ENCODE measurements at regions of chr3 and their contacts with region 1.

Region 1: DNA sequence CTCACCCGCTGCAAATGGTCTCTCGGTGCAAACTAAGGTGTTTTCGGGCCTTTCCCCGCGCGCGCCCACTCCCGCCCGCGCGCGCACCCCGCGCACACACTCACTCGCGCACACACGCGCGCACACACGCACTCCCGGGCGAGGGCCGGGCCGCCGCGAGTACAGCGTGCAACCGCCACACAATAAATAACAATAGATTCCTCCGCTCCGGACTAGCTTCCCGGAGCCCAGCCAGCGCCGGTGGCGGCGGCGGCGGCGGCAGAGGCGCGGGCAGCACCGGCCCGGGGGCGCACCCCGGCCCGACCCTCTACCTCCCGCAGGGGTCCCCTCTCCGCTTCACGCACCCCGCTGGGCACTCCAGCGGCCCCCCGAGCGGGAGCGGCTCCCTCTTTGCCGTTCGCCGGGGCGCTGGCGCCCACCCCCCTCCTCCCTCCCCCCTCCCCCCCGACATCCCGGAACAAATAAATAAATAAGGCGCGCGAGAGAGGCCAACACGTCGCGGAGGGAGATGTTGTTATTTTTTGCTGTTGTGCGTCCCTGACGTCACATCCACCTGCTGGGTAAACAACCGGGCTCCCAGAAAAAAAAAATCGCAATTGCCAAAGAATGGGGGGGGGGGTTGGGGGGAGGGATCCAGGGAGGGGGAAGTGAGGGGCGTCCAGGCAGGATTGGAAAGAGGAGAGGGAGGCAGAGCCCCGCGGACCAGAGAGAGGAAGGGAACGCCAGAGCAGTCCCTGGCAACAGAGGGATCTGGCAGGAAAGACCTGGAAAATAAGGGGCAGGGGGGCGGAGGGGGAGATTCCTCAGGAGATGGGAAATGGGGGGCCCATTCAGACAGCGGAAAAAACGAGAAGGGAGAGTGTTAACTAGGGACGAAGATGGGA is at the start of gene FOXP1:
- DNase-seq: peak; percentile 75
- H3K4me3 Mint-ChIP-seq: peak within 1 kb of the TSS; percentile 88
- H3K27ac Mint-ChIP-seq: peak within 1 kb of the TSS; percentile 91
- H3K4me1 Mint-ChIP-seq: peaks cover 56% of the 10 kb centered on the region
- H3K27me3 Mint-ChIP-seq: peaks cover 1% of the 10 kb centered on the region
- total RNA-seq, gene FOXP1: 94.4 to 102 TPM

Region 2: GRCh38 chr3:70531063-70531657 is 1052.6 kb before region 1 on chr3:
- CTCF ChIA-PET with region 1: no interaction called
- POLR2A ChIA-PET with region 1: no interaction called
- intact Hi-C with region 1: loop called (anchors 5 kb)
- DNase-seq: no peak
- H3K4me3 Mint-ChIP-seq: no peak overlapping the region
- H3K27ac Mint-ChIP-seq: no peak overlapping the region
- H3K4me1 Mint-ChIP-seq: no peaks in the 10 kb centered on the region
- H3K27me3 Mint-ChIP-seq: peaks cover 24% of the 10 kb centered on the region

Region 3: GRCh38 chr3:70716832-70717231 is 867.0 kb before region 1 on chr3:
- CTCF ChIA-PET with region 1: interaction called, 3 read pairs
- POLR2A ChIA-PET with region 1: no interaction called
- intact Hi-C with region 1: loop called (anchors 5 kb)
- DNase-seq: peak; percentile 9
- H3K4me3 Mint-ChIP-seq: no peak overlapping the region
- H3K27ac Mint-ChIP-seq: no peak overlapping the region
- H3K4me1 Mint-ChIP-seq: no peaks in the 10 kb centered on the region
- H3K27me3 Mint-ChIP-seq: peaks cover 19% of the 10 kb centered on the region

Region 4: DNA sequence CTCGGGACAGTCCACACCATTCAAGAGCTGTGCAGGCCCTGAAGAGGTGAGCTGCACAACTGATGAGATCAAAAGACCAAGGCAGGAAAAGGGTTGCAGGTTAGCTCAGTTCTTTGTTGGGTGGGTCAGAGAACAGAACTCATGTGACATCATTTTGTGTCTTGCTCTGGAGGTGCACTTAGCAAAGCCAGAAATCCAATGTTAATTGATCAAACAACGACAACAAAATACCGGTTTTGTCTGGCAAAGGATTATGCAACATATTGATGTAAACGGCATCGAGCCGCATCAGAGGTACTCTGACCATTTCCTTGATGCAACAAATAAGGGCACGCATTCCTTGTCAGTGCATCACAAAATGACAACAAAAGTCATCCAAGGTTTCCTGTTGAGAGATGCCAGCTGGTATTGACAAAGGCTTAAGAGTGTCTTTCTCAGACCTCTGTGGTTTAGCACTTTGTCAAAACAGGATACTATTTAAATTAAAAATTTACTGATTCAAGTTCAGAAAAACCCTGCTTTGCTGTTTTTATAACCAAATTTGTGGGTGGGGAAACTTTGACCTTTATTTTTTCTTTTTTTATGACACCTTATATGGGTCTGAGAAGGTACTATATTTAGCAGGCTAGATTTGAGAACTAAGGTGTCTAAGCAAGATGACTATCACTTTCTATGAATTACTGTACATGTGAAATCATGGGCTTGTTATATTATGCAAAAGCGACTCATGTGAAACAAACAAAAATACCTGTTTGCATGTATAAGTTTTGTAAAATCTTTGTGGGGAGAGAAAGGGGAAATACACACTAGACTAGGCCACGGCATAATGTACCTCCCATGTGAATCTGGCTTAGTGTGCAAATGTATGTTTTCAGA is 496.4 kb before region 1 on chr3:
- CTCF ChIA-PET with region 1: no interaction called
- POLR2A ChIA-PET with region 1: interaction called, 7 read pairs
- intact Hi-C with region 1: loop called (anchors 1 kb)
- DNase-seq: peak; percentile 62
- H3K4me3 Mint-ChIP-seq: peak overlapping the region; percentile 38
- H3K27ac Mint-ChIP-seq: peak overlapping the region; percentile 81
- H3K4me1 Mint-ChIP-seq: peaks cover 88% of the 10 kb centered on the region
- H3K27me3 Mint-ChIP-seq: no peaks in the 10 kb centered on the region

Region 5: GRCh38 chr3:71423151-71423906 is 160.5 kb before region 1 on chr3:
- CTCF ChIA-PET with region 1: no interaction called
- POLR2A ChIA-PET with region 1: interaction called, 5 read pairs
- intact Hi-C with region 1: loop called (anchors 5 kb)
- DNase-seq: no peak
- H3K4me3 Mint-ChIP-seq: no peak overlapping the region
- H3K27ac Mint-ChIP-seq: peak overlapping the region; percentile 85
- H3K4me1 Mint-ChIP-seq: peaks cover 81% of the 10 kb centered on the region
- H3K27me3 Mint-ChIP-seq: no peaks in the 10 kb centered on the region

Region 6: GRCh38 chr3:71542521-71543370 is 41.1 kb before region 1 on chr3:
- CTCF ChIA-PET with region 1: interaction called, 3 read pairs
- POLR2A ChIA-PET with region 1: no interaction called
- intact Hi-C with region 1: loop called (anchors 5 kb)
- DNase-seq: no peak
- H3K4me3 Mint-ChIP-seq: no peak overlapping the region
- H3K27ac Mint-ChIP-seq: no peak overlapping the region
- H3K4me1 Mint-ChIP-seq: no peaks in the 10 kb centered on the region
- H3K27me3 Mint-ChIP-seq: no peaks in the 10 kb centered on the region

Measured in activated CD4-positive, alpha-beta memory T cell treated with anti-CD3 and anti-CD28 coated beads for 36 hours (primary cell).